ENCODE measurements at regions of chr2 and their contacts with region 1.

Region 1: DNA sequence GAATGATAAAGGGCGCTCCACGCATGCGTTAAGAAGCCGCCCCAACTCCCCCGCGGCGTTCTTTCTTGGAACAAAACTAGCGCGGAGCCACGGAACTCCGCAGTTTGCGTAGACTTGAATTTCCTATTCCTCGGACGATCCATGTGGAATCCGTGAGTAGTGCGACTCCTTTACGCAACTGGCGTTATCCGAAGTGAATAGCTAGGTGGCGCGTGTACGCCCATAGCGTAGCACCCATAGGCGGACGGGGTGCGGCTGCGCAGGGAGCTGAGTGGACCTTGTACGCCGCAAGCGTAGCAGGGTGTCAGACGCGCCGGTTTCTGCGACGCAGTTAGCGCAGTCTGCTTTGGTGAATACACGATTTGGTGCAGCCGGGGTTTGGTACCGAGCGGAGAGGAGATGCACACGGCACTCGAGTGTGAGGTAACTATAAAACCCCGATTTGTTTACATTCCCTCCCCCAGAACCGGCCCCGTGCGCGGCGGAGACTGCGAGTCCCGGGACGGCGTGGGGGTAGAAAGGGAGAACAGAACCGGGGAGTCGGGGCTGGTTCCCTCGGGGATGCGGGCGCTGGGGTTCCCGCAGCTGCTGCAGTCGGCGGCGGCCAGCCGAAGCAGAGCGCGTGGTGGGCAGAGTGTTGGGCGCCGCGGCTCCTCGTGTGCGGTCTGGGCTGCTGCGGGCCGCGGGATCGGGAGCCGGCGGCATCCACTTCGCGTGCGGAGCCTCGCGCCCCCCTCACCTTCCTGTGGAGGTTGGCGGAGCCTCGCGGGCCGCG is at the start of gene SLC39A10:
- DNase-seq: peak; percentile 93 to 100 (median 98)
- ATAC-seq: peak; percentile 78
- H3K4me3 ChIP-seq: peak within 1 kb of the TSS; percentile 94
- H3K4me3 Mint-ChIP-seq: peak within 1 kb of the TSS; percentile 99
- H3K27ac ChIP-seq: peak within 1 kb of the TSS; percentile 97 to 99
- H3K27ac Mint-ChIP-seq: peak within 1 kb of the TSS; percentile 98
- H3K4me1 ChIP-seq: peaks cover 10% of the 10 kb centered on the region
- H3K4me1 Mint-ChIP-seq: peaks cover 35% of the 10 kb centered on the region
- H3K27me3 ChIP-seq: no peaks in the 10 kb centered on the region
- H3K27me3 Mint-ChIP-seq: peaks cover 4% of the 10 kb centered on the region
- CTCF ChIP-seq: no peak
- total RNA-seq, gene SLC39A10: 38.2 to 39.4 TPM

Region 2: GRCh38 chr2:193847140-193847539 is 1809.9 kb before region 1 on chr2:
- CTCF ChIA-PET with region 1: no interaction called
- POLR2A ChIA-PET with region 1: no interaction called
- intact Hi-C with region 1: no loop called
- DNase-seq: no peak
- ATAC-seq: no peak
- H3K4me3 ChIP-seq: no peak overlapping the region
- H3K4me3 Mint-ChIP-seq: no peak overlapping the region
- H3K27ac ChIP-seq: no peak overlapping the region
- H3K27ac Mint-ChIP-seq: no peak overlapping the region
- H3K4me1 ChIP-seq: no peaks in the 10 kb centered on the region
- H3K4me1 Mint-ChIP-seq: no peaks in the 10 kb centered on the region
- H3K27me3 ChIP-seq: no peaks in the 10 kb centered on the region
- H3K27me3 Mint-ChIP-seq: no peaks in the 10 kb centered on the region
- CTCF ChIP-seq: no peak

Region 3: GRCh38 chr2:194166818-194167217 is 1490.2 kb before region 1 on chr2:
- CTCF ChIA-PET with region 1: no interaction called
- POLR2A ChIA-PET with region 1: no interaction called
- intact Hi-C with region 1: loop called in 1 of 2 experiments (anchors 5 kb)
- DNase-seq: peak in 3 of 14 experiments; percentile 11 to 22 (median 21)
- ATAC-seq: no peak
- H3K4me3 ChIP-seq: no peak overlapping the region
- H3K4me3 Mint-ChIP-seq: no peak overlapping the region
- H3K27ac ChIP-seq: no peak overlapping the region
- H3K27ac Mint-ChIP-seq: no peak overlapping the region
- H3K4me1 ChIP-seq: no peaks in the 10 kb centered on the region
- H3K4me1 Mint-ChIP-seq: no peaks in the 10 kb centered on the region
- H3K27me3 ChIP-seq: no peaks in the 10 kb centered on the region
- H3K27me3 Mint-ChIP-seq: peaks cover 5% of the 10 kb centered on the region
- CTCF ChIP-seq: peak; percentile 38

Region 4: GRCh38 chr2:195498176-195498575 is 158.9 kb before region 1 on chr2:
- CTCF ChIA-PET with region 1: interaction called, 35 read pairs
- POLR2A ChIA-PET with region 1: interaction called, 52 read pairs
- intact Hi-C with region 1: loop called (anchors 1 kb)
- DNase-seq: peak; percentile 39 to 82 (median 60)
- ATAC-seq: peak; percentile 60
- H3K4me3 ChIP-seq: no peak overlapping the region
- H3K4me3 Mint-ChIP-seq: no peak overlapping the region
- H3K27ac ChIP-seq: no peak overlapping the region
- H3K27ac Mint-ChIP-seq: no peak overlapping the region
- H3K4me1 ChIP-seq: peaks cover 6% of the 10 kb centered on the region
- H3K4me1 Mint-ChIP-seq: peaks cover 41% of the 10 kb centered on the region
- H3K27me3 ChIP-seq: no peaks in the 10 kb centered on the region
- H3K27me3 Mint-ChIP-seq: no peaks in the 10 kb centered on the region
- CTCF ChIP-seq: peak; percentile 79

Region 5: GRCh38 chr2:195559431-195559914 is 97.6 kb before region 1 on chr2:
- CTCF ChIA-PET with region 1: interaction called, 10 read pairs
- POLR2A ChIA-PET with region 1: interaction called, 143 read pairs
- intact Hi-C with region 1: loop called in 1 of 2 experiments (anchors 2 kb)
- DNase-seq: peak; percentile 45 to 95 (median 72)
- ATAC-seq: peak; percentile 86
- H3K4me3 ChIP-seq: peak overlapping the region; percentile 11
- H3K4me3 Mint-ChIP-seq: peak overlapping the region; percentile 65
- H3K27ac ChIP-seq: peak overlapping the region; percentile 66 to 69
- H3K27ac Mint-ChIP-seq: peak overlapping the region; percentile 94
- H3K4me1 ChIP-seq: peaks cover 74% of the 10 kb centered on the region
- H3K4me1 Mint-ChIP-seq: peaks cover 77% of the 10 kb centered on the region
- H3K27me3 ChIP-seq: no peaks in the 10 kb centered on the region
- H3K27me3 Mint-ChIP-seq: no peaks in the 10 kb centered on the region
- CTCF ChIP-seq: no peak

Region 6: DNA sequence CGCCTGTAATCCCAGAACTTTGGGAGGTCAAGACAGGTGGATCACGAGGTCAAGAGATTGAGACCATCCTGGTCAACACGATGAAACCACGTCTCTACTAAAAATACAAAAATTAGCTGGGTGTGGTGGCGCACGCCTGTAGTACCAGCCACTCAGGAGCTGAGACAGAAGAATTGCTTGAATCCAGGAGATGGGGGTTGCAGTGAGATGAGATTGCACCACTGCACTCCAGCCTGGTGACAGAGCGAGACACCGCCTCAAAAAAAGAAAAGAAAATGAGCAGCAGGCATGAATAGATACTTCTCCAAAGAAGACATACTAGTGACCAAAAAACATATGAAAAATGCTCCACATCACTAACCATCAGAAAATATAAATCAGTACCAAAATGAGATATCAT is 273.0 kb after region 1 on chr2:
- CTCF ChIA-PET with region 1: no interaction called
- POLR2A ChIA-PET with region 1: no interaction called
- intact Hi-C with region 1: loop called in 1 of 2 experiments (anchors 10 kb)
- DNase-seq: no peak
- ATAC-seq: no peak
- H3K4me3 ChIP-seq: no peak overlapping the region
- H3K4me3 Mint-ChIP-seq: no peak overlapping the region
- H3K27ac ChIP-seq: no peak overlapping the region
- H3K27ac Mint-ChIP-seq: no peak overlapping the region
- H3K4me1 ChIP-seq: no peaks in the 10 kb centered on the region
- H3K4me1 Mint-ChIP-seq: no peaks in the 10 kb centered on the region
- H3K27me3 ChIP-seq: no peaks in the 10 kb centered on the region
- H3K27me3 Mint-ChIP-seq: no peaks in the 10 kb centered on the region
- CTCF ChIP-seq: no peak

Region 7: DNA sequence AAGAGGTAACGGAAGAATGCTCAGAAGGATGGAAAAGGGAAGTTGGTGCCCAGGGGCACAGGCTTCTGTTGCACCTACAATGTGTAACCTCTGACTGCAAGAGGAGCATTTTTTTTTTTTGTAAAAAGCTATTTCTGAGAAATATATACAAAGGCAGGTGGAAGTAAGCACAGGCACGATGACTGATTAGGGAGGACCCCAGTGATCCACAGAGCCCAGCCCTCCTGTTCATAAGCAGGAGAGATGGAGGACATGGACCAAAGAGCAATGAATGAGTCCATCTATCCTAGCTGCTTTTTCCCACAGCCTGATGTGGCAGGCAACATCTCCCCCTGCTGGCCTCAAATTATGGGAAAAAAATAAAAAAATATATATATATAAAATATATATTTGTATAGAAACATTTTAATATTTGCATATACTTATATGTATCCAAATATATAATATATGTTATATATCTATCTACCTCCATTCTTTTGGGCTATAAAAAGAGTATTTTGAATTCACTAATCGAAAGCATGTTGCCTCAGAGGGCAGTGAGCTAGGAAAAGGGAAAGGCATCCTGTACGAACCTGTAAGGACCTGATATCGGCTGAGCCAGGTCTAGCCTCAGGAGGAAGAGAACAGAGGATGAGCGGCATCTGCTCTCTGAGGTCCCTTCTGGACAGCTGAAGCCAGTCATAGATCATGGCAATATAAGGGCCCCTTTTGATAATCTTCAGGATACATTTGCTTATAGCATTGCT is 680.3 kb after region 1 on chr2:
- CTCF ChIA-PET with region 1: no interaction called
- POLR2A ChIA-PET with region 1: no interaction called
- intact Hi-C with region 1: loop called (anchors 10 kb)
- DNase-seq: peak in 8 of 14 experiments; percentile 7 to 64 (median 27)
- ATAC-seq: peak; percentile 39
- H3K4me3 ChIP-seq: no peak overlapping the region
- H3K4me3 Mint-ChIP-seq: no peak overlapping the region
- H3K27ac ChIP-seq: no peak overlapping the region
- H3K27ac Mint-ChIP-seq: no peak overlapping the region
- H3K4me1 ChIP-seq: no peaks in the 10 kb centered on the region
- H3K4me1 Mint-ChIP-seq: no peaks in the 10 kb centered on the region
- H3K27me3 ChIP-seq: no peaks in the 10 kb centered on the region
- H3K27me3 Mint-ChIP-seq: no peaks in the 10 kb centered on the region
- CTCF ChIP-seq: peak; percentile 71

Measured in CD4-positive, alpha-beta T cell (primary cell).